ENCODE measurements at regions of chr14 and their contacts with region 1.

Region 1: GRCh38 chr14:99215277-99215676 is 56.7 kb downstream of the BCL11B start:
- DNase-seq: no peak
- H3K4me3 Mint-ChIP-seq: peak overlapping the region; percentile 71
- H3K27ac Mint-ChIP-seq: peak overlapping the region; percentile 85
- H3K4me1 Mint-ChIP-seq: peaks cover 94% of the 10 kb centered on the region
- H3K27me3 Mint-ChIP-seq: no peaks in the 10 kb centered on the region

Region 2: GRCh38 chr14:99205086-99205688 is 10.1 kb before region 1 on chr14:
- CTCF ChIA-PET with region 1: interaction called, 5 read pairs
- intact Hi-C with region 1: loop called (anchors 1 kb)
- DNase-seq: peak; percentile 58
- H3K4me3 Mint-ChIP-seq: peak overlapping the region; percentile 52
- H3K27ac Mint-ChIP-seq: peak overlapping the region; percentile 95
- H3K4me1 Mint-ChIP-seq: peaks cover 100% of the 10 kb centered on the region
- H3K27me3 Mint-ChIP-seq: no peaks in the 10 kb centered on the region

Region 3: DNA sequence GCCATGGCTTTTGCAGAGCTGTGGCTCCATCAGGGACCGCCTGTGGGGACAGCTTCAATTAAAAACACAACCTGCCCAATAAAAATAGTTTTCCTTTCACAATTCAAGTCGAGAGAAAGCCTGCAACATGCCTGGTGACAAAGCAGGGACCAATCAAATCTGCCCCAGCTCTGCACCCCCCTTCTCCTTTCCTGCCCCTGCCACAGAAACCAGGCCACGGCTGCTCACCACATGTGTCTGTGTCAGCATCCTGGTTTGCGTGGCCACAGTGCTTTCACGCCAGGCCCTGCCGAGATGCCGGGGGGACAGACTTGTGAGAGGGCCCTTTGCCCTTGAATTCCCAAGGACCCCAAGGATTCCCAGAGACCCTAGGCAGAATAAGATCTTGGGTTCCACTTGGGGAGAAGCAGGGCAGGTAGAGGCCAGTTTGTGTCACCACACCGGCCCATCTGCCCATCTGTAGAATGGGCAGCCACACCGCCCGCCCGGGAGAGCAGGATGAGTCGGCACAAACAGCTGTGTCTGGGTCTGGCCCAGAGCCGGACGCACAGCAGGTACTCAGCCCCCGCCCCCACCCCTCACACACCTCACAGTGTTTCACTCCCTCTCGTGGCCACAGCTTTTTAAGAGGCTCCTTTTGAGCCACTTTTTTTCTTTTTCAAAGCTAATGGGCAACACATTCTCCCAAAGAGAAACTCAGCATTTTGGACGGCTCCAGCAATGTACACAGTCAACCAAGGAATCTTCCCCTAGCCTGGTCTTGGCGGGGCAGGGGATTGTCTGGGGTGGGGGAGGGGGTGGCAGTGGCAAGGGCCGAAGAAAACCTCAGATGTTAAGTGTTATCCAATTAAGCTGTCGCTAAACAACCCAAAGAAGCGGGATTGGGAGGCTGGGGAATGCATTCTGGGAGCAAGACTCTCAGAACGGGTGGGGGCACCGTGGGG is 15.2 kb after region 1 on chr14:
- CTCF ChIA-PET with region 1: interaction called, 12 read pairs
- intact Hi-C with region 1: no loop called
- DNase-seq: peak; percentile 93
- H3K4me3 Mint-ChIP-seq: peak overlapping the region; percentile 73
- H3K27ac Mint-ChIP-seq: peak overlapping the region; percentile 97
- H3K4me1 Mint-ChIP-seq: peaks cover 95% of the 10 kb centered on the region
- H3K27me3 Mint-ChIP-seq: no peaks in the 10 kb centered on the region